ENCODE measurements at regions of chr15 and their contacts with region 1.

Region 1: GRCh38 chr15:69045808-69046207 is 31.3 kb downstream of the NOX5 start:
- DNase-seq: no peak
- H3K4me3 ChIP-seq: no peak overlapping the region
- H3K27ac ChIP-seq: peak overlapping the region; percentile 8
- H3K4me1 ChIP-seq: peaks cover 25% of the 10 kb centered on the region
- H3K27me3 ChIP-seq: no peaks in the 10 kb centered on the region
- CTCF ChIP-seq: peak in 1 of 2 donors; percentile 18
- POLR2A ChIP-seq: no peak

Region 2: DNA sequence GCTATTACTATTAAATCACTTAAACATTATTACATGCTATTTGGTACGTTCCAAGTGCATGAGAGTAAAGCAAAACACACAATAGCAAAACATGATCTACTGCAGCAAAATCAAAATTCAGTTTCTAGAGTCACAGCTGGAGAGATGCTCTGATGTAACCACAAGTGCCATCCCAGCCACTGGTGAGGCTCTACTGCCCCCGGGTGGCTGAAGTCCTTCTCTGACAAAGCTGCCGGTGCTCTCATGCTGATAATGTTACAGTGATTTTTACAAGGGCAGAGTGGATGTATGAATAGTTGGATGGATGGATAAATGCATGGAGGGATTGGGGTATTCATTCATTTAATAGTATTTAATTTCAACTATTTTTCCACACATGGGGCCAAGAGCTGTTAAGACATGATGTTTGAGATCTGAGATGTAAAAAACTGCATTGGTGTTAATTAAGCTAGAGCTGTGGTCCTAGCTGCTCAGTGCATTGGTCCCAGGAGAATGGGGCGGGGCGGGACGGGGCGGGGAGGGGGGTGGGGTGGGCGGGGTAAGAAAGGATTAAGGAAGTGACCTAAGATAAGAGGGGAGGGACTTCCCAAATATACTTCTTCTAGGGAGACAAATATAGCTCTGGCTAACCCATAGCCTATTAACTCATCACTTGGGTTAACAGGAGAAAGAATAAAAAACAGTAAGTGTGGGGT is 120.8 kb before region 1 on chr15:
- CTCF ChIA-PET with region 1: no interaction called
- POLR2A ChIA-PET with region 1: no interaction called
- dilution Hi-C with region 1: no loop called
- intact Hi-C with region 1: no loop called
- DNase-seq: peak; percentile 75
- H3K4me3 ChIP-seq: no peak overlapping the region
- H3K27ac ChIP-seq: no peak overlapping the region
- H3K4me1 ChIP-seq: no peaks in the 10 kb centered on the region
- H3K27me3 ChIP-seq: peaks cover 5 to 37% of the 10 kb centered on the region in 2 experiments
- CTCF ChIP-seq: peak; percentile 72 to 78
- POLR2A ChIP-seq: no peak

Region 3: DNA sequence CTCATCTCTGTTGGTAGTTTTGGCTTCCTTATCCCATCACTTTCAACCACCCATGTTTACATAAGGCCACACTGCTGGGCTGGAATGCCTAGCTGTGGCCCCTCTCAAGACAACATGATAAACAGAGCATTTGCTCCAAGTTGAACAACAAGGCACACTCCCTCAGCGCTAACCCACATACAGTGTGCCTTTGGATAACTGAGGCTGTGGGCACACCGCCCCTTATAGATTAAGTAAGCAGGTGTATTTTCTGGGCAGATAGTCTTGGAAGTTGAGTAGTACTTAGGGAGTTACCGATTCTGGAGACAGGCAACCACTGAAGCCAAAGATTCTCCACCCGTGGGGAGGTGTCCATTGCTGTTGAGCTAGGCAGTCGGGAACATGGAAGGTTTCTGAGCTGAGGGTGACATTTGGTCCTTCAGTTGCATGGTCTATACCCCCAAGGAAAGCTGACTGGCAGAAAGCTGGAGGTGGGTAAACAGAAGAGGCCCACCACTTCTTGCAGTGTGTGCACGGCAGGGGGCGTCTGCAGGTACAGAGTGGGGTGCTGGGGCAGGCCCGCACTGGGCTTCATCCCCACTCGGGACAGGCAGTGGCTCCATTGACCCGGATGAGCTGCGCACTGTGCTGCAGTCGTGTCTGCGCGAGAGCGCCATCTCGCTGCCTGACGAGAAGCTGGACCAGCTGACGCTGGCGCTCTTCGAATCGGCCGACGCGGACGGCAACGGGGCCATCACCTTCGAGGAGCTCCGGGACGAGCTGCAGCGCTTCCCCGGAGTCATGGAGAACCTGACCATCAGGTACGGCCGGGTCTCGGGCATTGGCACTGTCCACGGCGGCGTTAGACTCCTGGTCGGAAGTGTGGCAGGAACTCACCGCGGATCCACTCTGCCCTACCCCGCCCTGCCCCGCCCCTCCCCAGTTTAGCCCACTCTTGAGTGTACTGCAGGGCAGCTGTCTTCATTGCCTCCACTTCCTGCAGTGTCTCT is 14.5 kb before region 1 on chr15:
- CTCF ChIA-PET with region 1: interaction called, 18 read pairs
- POLR2A ChIA-PET with region 1: no interaction called
- dilution Hi-C with region 1: no loop called
- intact Hi-C with region 1: no loop called
- DNase-seq: peak; percentile 35
- H3K4me3 ChIP-seq: peak overlapping the region in 2 of 3 experiments; percentile 9 to 24
- H3K27ac ChIP-seq: no peak overlapping the region
- H3K4me1 ChIP-seq: no peaks in the 10 kb centered on the region
- H3K27me3 ChIP-seq: peaks cover 0 to 2% of the 10 kb centered on the region in 2 experiments
- CTCF ChIP-seq: peak; percentile 56 to 70
- POLR2A ChIP-seq: no peak

Region 4: DNA sequence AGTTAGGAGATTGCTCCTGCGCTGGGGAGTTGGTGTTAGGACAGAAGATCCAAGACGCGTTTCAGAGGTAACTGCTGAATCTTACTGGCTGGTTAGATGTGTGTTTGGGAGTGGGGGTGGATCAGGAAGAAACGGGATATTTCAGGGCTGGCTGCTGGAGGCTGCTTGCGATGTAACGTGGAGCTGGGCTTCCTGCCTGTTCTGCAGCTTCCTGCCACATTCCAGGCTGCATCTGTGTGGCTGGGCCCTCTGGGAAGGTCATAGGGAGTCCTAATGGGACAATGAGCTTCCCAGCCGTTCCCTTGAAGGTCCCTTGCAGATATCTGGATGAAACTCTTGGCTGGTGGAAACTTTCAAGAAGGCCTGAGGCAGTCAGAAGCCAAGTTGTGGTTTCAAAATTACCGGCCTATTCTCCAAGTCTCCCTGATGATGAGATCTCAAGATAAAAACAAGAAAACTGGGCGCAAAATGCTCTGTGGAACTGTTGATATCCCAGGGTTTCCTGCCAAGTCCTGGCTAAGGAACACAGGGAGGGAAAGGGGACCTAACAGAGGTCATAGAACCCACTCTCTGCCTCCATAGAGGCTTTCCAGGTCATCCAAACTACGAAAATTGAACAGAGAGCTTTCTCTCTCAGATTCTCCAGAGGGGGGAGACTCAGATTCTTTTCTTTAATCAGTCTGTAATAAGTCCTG is 35.6 kb after region 1 on chr15:
- CTCF ChIA-PET with region 1: no interaction called
- POLR2A ChIA-PET with region 1: no interaction called
- dilution Hi-C with region 1: no loop called
- intact Hi-C with region 1: no loop called
- DNase-seq: peak; percentile 80
- H3K4me3 ChIP-seq: peak overlapping the region in 1 of 3 experiments; percentile 14
- H3K27ac ChIP-seq: peak overlapping the region; percentile 95
- H3K4me1 ChIP-seq: peaks cover 34% of the 10 kb centered on the region
- H3K27me3 ChIP-seq: no peaks in the 10 kb centered on the region
- CTCF ChIP-seq: no peak
- POLR2A ChIP-seq: peak; percentile 37

Measured in endothelial cell of umbilical vein (primary cell).